Activated CD8-positive, alpha-beta memory T cell treated with anti-CD3 and anti-CD28 coated beads, Interleukin-2, amount 10 ng/mL, durations not matched to agents 7 days and 5 days (primary cell): ENCODE measurements at regions of chr2 and their contacts with region 1.

Region 1: DNA sequence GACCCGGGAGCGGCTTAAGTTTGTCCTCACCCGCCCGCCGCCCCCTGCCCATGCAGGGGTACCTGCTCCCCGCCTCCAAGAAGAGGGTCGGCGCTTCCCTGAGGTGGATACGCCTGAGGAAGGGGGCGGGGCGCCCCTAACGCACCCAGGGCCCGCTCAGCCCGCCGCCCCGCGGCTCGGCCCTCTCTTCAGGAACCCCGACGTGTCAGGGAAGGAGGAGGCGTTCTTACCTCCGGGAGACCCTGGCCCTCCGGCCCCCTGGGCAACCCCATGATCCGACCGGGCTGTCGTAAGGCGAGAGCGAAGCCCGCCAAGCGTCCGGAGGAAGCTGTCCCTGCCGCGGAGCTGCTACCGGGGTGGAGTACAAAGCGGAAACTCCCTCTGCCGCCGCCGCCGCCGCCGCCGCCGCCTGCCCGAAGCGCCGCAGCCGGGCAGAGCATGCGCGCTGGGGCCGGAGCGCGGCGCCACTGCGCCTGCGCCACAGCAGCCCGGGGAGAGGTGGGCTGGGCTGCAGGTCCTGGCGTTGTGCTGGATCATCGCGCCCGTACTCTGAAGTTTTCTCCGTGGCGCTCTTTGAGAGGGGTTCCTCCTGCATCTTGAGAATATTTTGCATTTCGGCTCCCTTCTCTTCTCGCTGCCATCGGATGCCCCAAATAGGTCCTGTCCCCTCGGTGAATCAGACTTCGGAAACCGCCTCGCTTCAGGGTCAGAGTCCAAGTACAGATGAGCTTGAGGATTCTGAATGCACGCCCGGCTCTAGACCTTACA is at the start of gene CCDC93:
- DNase-seq: peak; percentile 88
- ATAC-seq: peak; percentile 88
- H3K4me3 Mint-ChIP-seq: peak within 1 kb of the TSS; percentile 87
- H3K27ac Mint-ChIP-seq: peak within 1 kb of the TSS; percentile 87
- H3K4me1 Mint-ChIP-seq: peaks cover 39% of the 10 kb centered on the region
- H3K27me3 Mint-ChIP-seq: no peaks in the 10 kb centered on the region
- total RNA-seq, gene CCDC93: 36.9 to 42.0 TPM

Region 2: GRCh38 chr2:117814417-117815264 is 199.3 kb before region 1 on chr2 and contains the start of gene DDX18:
- CTCF ChIA-PET with region 1: interaction called, 18 read pairs
- DNase-seq: peak; percentile 98
- ATAC-seq: peak; percentile 94
- H3K4me3 Mint-ChIP-seq: peak within 1 kb of the TSS; percentile 98
- H3K27ac Mint-ChIP-seq: peak within 1 kb of the TSS; percentile 96
- H3K4me1 Mint-ChIP-seq: peaks cover 33% of the 10 kb centered on the region
- H3K27me3 Mint-ChIP-seq: no peaks in the 10 kb centered on the region
- total RNA-seq, gene DDX18: 55.3 to 78.2 TPM

Region 3: DNA sequence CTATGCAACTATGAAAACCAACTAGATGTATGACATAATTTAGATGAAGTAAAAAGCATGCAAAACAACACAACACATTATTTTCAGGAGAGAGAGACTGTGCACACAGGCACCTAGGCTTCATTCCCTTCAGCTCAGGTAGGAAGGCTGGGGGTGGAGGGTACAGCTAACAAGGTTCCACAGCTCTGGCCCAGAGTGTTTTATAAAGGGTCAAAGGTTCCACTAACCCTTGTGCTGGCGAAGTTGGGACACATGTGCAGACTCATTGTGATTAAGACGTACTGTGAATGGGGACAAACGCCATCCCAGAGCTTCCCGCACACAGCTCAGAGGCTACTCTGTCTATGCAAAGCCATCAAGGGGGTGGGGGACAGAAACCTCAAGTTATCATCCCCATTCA is 19.2 kb before region 1 on chr2:
- CTCF ChIA-PET with region 1: no interaction called
- DNase-seq: no peak
- ATAC-seq: no peak
- H3K4me3 Mint-ChIP-seq: no peak overlapping the region
- H3K27ac Mint-ChIP-seq: no peak overlapping the region
- H3K4me1 Mint-ChIP-seq: no peaks in the 10 kb centered on the region
- H3K27me3 Mint-ChIP-seq: no peaks in the 10 kb centered on the region

Region 4: DNA sequence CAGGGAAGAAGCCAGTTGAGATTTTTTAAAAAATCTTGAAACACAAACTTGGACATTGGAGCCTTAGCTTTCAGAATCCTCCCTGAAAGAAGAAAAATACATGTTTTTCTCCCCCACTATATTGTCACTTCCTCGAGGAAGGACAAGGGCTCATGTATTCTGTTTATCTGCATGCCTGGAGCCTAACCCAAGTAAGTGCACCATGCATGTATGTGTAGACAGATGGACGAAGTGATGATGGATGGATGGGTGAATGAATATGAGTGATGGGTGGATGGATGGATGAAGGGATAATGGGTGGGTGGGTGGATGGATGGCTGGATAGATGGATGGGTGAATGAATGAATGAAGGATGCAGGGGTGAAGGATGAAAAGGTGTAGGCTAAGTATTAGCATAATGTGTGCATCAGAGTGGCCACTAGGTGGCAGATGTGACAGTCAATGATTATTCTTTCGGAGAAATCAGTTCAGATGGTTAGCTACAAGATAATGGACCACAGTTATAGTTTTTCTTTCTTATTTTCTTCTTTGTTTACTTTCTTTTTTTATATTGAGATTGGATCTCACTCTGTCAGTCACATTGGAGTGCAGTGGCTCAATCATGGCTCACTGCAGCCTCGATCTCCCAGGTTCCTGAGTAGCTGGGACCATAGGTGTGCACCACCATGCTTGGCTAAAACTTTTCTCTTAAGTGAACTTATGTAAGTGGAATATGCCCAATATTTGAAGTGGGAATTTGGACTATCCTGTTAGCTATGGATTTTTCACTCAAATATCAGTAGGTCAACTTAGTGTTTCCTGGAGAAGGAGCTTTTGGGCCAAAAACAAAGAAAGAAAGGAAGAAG is 18.5 kb after region 1 on chr2:
- CTCF ChIA-PET with region 1: interaction called, 10 read pairs
- DNase-seq: peak; percentile 62
- ATAC-seq: peak; percentile 67
- H3K4me3 Mint-ChIP-seq: no peak overlapping the region
- H3K27ac Mint-ChIP-seq: no peak overlapping the region
- H3K4me1 Mint-ChIP-seq: peaks cover 2% of the 10 kb centered on the region
- H3K27me3 Mint-ChIP-seq: peaks cover 60% of the 10 kb centered on the region

Region 5: DNA sequence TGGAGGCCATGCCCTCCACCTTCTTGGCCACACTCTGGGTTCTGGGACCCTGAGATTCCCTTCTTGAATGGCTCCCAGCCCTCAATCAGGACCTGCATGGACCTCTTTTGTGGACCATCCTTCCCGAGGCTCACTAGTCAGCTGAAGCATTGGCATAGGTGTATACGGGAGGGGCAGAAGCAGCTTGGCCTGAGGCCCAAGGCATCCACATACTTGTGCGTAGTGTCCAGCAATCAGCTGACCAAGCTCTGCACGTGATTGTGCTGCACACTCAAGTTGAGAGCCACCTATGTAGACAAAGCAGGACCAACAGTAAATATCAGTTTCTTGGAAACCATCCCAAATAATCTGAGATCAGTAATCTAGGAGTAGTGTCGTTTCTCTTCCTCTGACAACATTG is 194.0 kb after region 1 on chr2:
- CTCF ChIA-PET with region 1: no interaction called
- DNase-seq: no peak
- ATAC-seq: no peak
- H3K4me3 Mint-ChIP-seq: no peak overlapping the region
- H3K27ac Mint-ChIP-seq: no peak overlapping the region
- H3K4me1 Mint-ChIP-seq: peaks cover 2% of the 10 kb centered on the region
- H3K27me3 Mint-ChIP-seq: peaks cover 26% of the 10 kb centered on the region